IMR-90 (cell line): ENCODE measurements at regions of chr1 and their contacts with region 1.

Region 1: GRCh38 chr1:30707412-30708360 is 15.7 kb downstream of the MATN1 start:
- DNase-seq: peak; percentile 56
- ATAC-seq: peak; percentile 97
- H3K4me3 ChIP-seq: no peak overlapping the region
- H3K27ac ChIP-seq: no peak overlapping the region
- H3K4me1 ChIP-seq: no peaks in the 10 kb centered on the region
- H3K27me3 ChIP-seq: peaks cover 45% of the 10 kb centered on the region
- CTCF ChIP-seq: peak; percentile 98
- POLR2A ChIP-seq: peak; percentile 68; the same call in 1 of the 2 replicates
- RAD21 ChIP-seq: peak; percentile 100

Region 2: GRCh38 chr1:28886731-28887418 is 1820.8 kb before region 1 on chr1:
- CTCF ChIA-PET with region 1: no interaction called
- POLR2A ChIA-PET with region 1: no interaction called
- dilution Hi-C with region 1: no loop called
- in situ Hi-C with region 1: loop called (anchors 10 kb)
- intact Hi-C with region 1: loop called (anchors 2 kb)
- DNase-seq: peak; percentile 48
- ATAC-seq: peak; percentile 83
- H3K4me3 ChIP-seq: peak overlapping the region; percentile 65
- H3K27ac ChIP-seq: no peak overlapping the region; the same call in 1 of the 2 replicates
- H3K4me1 ChIP-seq: peaks cover 11% of the 10 kb centered on the region
- H3K27me3 ChIP-seq: peaks cover 8% of the 10 kb centered on the region
- CTCF ChIP-seq: no peak
- POLR2A ChIP-seq: no peak
- RAD21 ChIP-seq: no peak

Region 3: DNA sequence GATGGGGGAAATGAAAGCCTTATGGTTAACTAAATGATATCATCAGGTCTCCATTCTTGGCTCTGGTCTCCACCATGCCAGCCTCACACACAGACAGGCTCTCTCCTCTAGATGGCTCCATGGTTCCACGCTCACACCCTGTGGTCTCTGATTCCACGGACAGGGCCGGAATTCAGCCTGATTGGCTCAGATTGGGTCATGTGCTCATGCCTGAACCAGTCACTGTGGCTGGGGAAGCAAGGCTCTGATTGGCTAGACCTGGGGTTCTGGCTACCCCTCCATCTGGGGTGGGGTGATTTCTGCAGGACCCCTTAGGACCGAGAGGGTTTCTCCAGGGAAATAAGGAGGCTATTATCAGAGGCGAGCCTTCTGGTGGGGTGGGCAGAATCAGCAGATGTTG is 1194.3 kb before region 1 on chr1:
- CTCF ChIA-PET with region 1: no interaction called
- POLR2A ChIA-PET with region 1: no interaction called
- dilution Hi-C with region 1: no loop called
- in situ Hi-C with region 1: no loop called
- intact Hi-C with region 1: loop called (anchors 1 kb)
- DNase-seq: peak; percentile 70
- ATAC-seq: peak; percentile 93
- H3K4me3 ChIP-seq: no peak overlapping the region
- H3K27ac ChIP-seq: no peak overlapping the region
- H3K4me1 ChIP-seq: no peaks in the 10 kb centered on the region
- H3K27me3 ChIP-seq: peaks cover 9% of the 10 kb centered on the region
- CTCF ChIP-seq: peak; percentile 85
- POLR2A ChIP-seq: 0 out of 2 replicates have a peak, but pooled peaks have one; percentile 29
- RAD21 ChIP-seq: peak; percentile 97

Region 4: DNA sequence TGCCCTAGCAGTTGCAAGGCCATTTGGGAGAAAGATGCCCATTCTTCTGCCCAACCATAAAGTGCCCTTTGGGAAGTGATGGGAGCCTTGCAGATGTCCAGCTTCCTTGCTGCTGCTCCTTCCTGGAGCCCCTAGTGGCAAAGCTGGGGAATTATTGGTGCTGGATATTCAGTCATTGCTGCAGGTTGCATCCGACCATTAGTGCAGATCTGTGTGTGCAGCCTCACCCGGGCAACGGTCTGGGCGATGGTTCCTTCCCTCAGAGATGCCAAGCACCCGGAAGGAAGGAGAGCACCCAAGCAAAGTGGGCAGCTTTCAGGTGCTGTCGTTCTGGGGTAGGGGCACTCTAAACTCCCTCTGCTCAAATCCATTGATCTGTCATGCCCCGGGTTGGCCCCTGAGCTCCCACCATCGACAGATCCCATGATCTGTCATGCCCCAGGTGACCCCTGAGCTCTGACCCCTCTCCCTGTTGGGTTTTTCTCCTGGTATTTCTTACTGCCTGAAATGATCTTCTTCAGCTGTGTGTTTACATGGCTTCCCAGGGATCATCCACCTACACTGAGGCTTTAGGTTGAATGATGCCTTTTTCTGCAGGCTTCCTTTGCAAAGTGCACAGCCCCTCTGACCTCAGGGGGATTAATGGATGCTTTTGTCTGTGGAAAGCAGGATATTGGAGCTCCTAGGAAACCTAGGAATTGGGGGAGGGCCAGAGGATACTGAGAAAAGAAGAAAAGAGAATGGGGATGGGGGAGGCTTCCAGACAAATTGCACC is 1003.9 kb before region 1 on chr1:
- CTCF ChIA-PET with region 1: no interaction called
- POLR2A ChIA-PET with region 1: no interaction called
- dilution Hi-C with region 1: no loop called
- in situ Hi-C with region 1: loop called (anchors 10 kb)
- intact Hi-C with region 1: loop called (anchors 2 kb)
- DNase-seq: peak; percentile 54
- ATAC-seq: peak; percentile 76
- H3K4me3 ChIP-seq: no peak overlapping the region
- H3K27ac ChIP-seq: no peak overlapping the region
- H3K4me1 ChIP-seq: peaks cover 4% of the 10 kb centered on the region
- H3K27me3 ChIP-seq: no peaks in the 10 kb centered on the region; the same call in 1 of the 2 replicates
- CTCF ChIP-seq: peak; percentile 74
- POLR2A ChIP-seq: no peak
- RAD21 ChIP-seq: peak; percentile 69

Region 5: GRCh38 chr1:30111431-30111830 is 596.3 kb before region 1 on chr1:
- CTCF ChIA-PET with region 1: no interaction called
- POLR2A ChIA-PET with region 1: no interaction called
- dilution Hi-C with region 1: no loop called
- in situ Hi-C with region 1: no loop called
- intact Hi-C with region 1: loop called (anchors 2 kb)
- DNase-seq: peak; percentile 41
- ATAC-seq: peak; percentile 92
- H3K4me3 ChIP-seq: no peak overlapping the region
- H3K27ac ChIP-seq: no peak overlapping the region
- H3K4me1 ChIP-seq: no peaks in the 10 kb centered on the region
- H3K27me3 ChIP-seq: peaks cover 10% of the 10 kb centered on the region
- CTCF ChIP-seq: peak; percentile 72
- POLR2A ChIP-seq: no peak
- RAD21 ChIP-seq: peak; percentile 76